ENCODE measurements at regions of chr6 and their contacts with region 1.

Region 1: DNA sequence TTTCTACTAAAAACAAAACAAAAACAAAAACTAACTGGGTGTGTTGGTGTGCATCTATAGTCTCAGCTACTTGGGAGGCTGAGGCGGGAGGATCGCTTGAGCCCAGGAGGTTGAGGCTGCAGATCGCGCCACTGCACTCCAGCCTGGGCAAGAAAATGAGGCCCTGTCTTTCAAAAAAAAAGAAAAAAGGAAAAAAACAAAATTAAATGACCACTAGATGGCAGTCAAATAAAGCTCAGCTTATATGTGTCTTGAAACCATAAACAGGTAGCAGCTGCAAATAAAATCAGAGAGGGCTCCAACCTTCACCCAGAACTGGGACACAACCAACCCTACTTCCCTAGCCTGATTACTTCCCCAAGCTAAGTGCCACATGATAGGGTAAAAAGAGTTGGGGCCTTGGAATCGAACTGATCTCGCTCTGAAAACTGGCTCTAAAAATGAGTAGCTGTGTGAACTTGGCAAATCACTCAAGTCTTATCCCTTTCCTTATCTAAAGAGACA is 67.1 kb upstream of the ADGRF4 start:
- DNase-seq: peak; percentile 61 to 75 (median 69)
- H3K4me3 ChIP-seq: no peak overlapping the region
- H3K27ac ChIP-seq: no peak overlapping the region
- H3K4me1 ChIP-seq: peaks cover 0 to 5% (median 0%) of the 10 kb centered on the region in 4 experiments
- H3K27me3 ChIP-seq: peaks cover 0 to 2% (median 0%) of the 10 kb centered on the region in 5 experiments

Region 2: GRCh38 chr6:47729019-47729418 is 97.7 kb after region 1 on chr6:
- CTCF ChIA-PET with region 1: interaction called, 73 read pairs
- POLR2A ChIA-PET with region 1: interaction called, 3 read pairs
- DNase-seq: no peak
- H3K4me3 ChIP-seq: no peak overlapping the region
- H3K27ac ChIP-seq: no peak overlapping the region
- H3K4me1 ChIP-seq: no peaks in the 10 kb centered on the region
- H3K27me3 ChIP-seq: peaks cover 0 to 54% (median 17%) of the 10 kb centered on the region in 5 experiments

Region 3: DNA sequence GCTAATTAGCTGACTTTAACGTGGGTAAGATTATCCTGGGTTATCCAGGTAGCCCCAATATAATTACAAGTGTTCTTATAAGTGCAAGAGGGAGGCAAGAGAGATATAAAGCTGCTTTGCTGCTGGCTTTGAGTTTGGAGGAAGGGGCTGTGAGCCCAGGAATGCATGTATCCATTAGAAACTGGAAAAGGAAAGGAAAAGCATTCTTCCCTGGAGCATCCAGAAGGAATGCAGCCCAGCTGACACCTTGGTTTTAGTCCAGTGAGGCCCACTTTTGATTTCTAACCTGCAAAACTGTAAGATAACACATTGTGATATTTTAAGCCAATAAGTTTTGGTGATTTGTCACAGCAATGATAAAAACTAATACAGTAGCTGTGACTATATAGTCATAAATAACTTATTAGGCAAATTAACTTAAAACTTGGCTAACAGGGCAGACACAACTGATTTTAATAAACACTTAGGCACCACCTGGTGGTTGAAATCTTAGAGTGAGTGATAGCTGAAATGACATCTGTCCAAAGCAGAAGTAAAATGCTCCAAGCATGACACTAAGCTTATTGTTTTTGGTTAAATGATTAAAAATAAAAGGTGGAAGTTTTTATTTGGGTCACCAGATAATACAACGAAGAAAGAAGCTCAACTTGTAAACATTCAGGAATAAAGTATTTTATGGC is 102.7 kb after region 1 on chr6:
- CTCF ChIA-PET with region 1: interaction called, 73 read pairs
- POLR2A ChIA-PET with region 1: interaction called, 3 read pairs
- DNase-seq: peak; percentile 42 to 69 (median 66)
- H3K4me3 ChIP-seq: no peak overlapping the region
- H3K27ac ChIP-seq: no peak overlapping the region
- H3K4me1 ChIP-seq: no peaks in the 10 kb centered on the region
- H3K27me3 ChIP-seq: peaks cover 0 to 17% (median 10%) of the 10 kb centered on the region in 5 experiments

Region 4: DNA sequence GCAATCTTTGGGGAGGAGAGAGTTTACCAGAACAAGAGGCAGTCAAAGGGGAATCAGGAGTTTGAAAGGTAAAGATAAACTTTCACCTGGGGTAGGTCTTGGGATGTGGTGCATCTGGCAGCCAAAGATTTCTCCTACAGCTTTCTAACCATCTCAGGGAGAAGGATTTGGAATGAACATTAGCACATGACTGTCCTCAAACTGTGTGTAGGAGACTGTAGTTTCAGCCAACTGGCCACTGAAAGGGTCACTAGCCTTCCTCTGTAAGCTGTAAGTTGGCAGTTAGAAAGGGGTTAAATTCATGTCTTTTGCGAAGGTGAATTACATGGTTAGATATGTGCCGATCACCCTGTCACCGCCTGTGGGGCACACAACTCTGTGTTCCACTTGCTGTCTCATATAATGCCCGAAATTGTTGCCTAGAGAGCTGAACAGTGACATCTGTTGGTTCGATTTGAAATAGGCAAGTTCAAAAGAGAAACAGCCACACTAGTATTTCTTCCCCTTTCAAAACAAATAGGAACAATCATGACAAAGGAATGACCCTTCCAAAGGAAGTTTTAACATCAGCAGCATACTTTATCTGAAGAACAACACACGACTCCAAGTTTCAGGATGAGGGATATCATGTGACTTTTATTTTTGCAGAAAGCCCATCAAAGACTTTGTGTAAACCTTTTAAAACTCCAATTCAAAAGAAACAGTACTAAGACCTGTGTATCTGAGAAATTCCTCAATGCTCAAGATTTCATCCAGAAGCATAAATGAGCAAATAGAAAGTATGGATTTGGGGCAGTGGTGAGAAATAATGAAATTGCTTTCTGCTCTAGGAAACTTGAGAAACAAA is 149.4 kb after region 1 on chr6:
- CTCF ChIA-PET with region 1: interaction called, 23 read pairs
- POLR2A ChIA-PET with region 1: no interaction called
- DNase-seq: peak; percentile 60 to 73 (median 70)
- H3K4me3 ChIP-seq: peak overlapping the region in 4 of 7 experiments; percentile 28 to 46 (median 35)
- H3K27ac ChIP-seq: no peak overlapping the region
- H3K4me1 ChIP-seq: peaks cover 0 to 4% (median 0%) of the 10 kb centered on the region in 4 experiments
- H3K27me3 ChIP-seq: peaks cover 0 to 3% (median 0%) of the 10 kb centered on the region in 5 experiments

Measured in common myeloid progenitor, CD34-positive (primary cell).